Activated CD8-positive, alpha-beta T cell treated with anti-CD3 and anti-CD28 coated beads, Interleukin-2, amount 10 ng/mL, durations not matched to agents 7 days and 5 days (primary cell): ENCODE measurements at regions of chr3 and their contacts with region 1.

Region 1: GRCh38 chr3:45929042-45929679 is 14.1 kb upstream of the CXCR6 start:
- DNase-seq: peak; percentile 77
- ATAC-seq: peak; percentile 92
- H3K4me3 Mint-ChIP-seq: no peak overlapping the region
- H3K27ac Mint-ChIP-seq: peak overlapping the region; percentile 55
- H3K4me1 Mint-ChIP-seq: peaks cover 5% of the 10 kb centered on the region
- H3K27me3 Mint-ChIP-seq: no peaks in the 10 kb centered on the region

Region 2: GRCh38 chr3:45507820-45508317 is 421.3 kb before region 1 on chr3:
- CTCF ChIA-PET with region 1: interaction called, 11 read pairs
- POLR2A ChIA-PET with region 1: interaction called, 3 read pairs
- DNase-seq: no peak
- ATAC-seq: peak; percentile 43
- H3K4me3 Mint-ChIP-seq: no peak overlapping the region
- H3K27ac Mint-ChIP-seq: no peak overlapping the region
- H3K4me1 Mint-ChIP-seq: peaks cover 2% of the 10 kb centered on the region
- H3K27me3 Mint-ChIP-seq: no peaks in the 10 kb centered on the region

Region 3: DNA sequence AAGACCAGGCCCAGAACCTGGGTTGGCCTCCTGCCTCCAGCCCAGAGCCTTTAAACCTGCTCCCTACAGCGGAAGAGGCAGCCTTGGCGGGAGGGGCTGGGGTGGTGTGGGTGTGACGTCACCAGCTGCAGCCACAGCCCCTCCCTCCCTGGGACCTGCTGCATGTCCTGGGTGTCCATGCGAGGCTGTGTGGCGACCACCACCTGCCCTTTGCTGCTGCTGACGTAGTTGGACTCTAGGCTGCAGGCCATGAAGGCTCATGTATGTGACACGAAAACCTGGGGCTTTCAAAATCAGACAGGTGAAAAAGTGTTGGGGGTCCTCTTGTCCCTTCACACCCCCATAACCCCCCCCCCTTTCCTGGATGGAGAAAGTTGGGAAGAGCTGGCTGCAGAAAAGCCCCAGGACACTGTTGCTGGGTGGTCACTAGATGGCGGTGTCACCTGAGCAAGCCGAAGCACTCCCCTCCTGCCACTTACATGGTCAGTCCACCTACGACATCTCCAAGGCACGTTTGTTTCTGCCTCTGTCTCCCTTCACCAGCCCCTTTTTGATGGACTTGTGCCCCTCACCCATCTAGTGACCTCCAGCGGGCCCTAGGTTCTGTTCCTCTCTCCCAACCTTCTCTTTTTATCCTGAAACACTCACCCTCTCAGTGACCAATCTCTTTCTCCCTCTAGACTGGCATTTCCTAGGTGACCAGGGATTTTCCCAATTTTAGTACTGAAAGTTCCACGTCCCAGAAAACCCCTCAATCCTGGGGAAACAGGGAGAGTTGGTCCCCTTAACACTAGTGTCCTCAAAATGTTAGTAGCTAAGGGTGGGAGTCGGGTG is 168.1 kb before region 1 on chr3:
- CTCF ChIA-PET with region 1: interaction called, 52 read pairs
- POLR2A ChIA-PET with region 1: no interaction called
- DNase-seq: peak; percentile 61
- ATAC-seq: peak; percentile 64
- H3K4me3 Mint-ChIP-seq: no peak overlapping the region
- H3K27ac Mint-ChIP-seq: no peak overlapping the region
- H3K4me1 Mint-ChIP-seq: peaks cover 5% of the 10 kb centered on the region
- H3K27me3 Mint-ChIP-seq: peaks cover 4% of the 10 kb centered on the region